CD4-positive, alpha-beta memory T cell (primary cell): ENCODE measurements at regions of chr5 and their contacts with region 1.

Region 1: GRCh38 chr5:116947691-116948528 is 373.3 kb upstream of the SEMA6A start:
- DNase-seq: peak; percentile 25 to 43 (median 29)
- H3K4me3 ChIP-seq: no peak overlapping the region
- H3K4me3 Mint-ChIP-seq: no peak overlapping the region
- H3K27ac ChIP-seq: no peak overlapping the region
- H3K27ac Mint-ChIP-seq: no peak overlapping the region
- H3K4me1 ChIP-seq: no peaks in the 10 kb centered on the region
- H3K4me1 Mint-ChIP-seq: peaks cover 0 to 8% (median 4%) of the 10 kb centered on the region in 4 donors
- H3K27me3 ChIP-seq: no peaks in the 10 kb centered on the region
- H3K27me3 Mint-ChIP-seq: no peaks in the 10 kb centered on the region

Region 2: DNA sequence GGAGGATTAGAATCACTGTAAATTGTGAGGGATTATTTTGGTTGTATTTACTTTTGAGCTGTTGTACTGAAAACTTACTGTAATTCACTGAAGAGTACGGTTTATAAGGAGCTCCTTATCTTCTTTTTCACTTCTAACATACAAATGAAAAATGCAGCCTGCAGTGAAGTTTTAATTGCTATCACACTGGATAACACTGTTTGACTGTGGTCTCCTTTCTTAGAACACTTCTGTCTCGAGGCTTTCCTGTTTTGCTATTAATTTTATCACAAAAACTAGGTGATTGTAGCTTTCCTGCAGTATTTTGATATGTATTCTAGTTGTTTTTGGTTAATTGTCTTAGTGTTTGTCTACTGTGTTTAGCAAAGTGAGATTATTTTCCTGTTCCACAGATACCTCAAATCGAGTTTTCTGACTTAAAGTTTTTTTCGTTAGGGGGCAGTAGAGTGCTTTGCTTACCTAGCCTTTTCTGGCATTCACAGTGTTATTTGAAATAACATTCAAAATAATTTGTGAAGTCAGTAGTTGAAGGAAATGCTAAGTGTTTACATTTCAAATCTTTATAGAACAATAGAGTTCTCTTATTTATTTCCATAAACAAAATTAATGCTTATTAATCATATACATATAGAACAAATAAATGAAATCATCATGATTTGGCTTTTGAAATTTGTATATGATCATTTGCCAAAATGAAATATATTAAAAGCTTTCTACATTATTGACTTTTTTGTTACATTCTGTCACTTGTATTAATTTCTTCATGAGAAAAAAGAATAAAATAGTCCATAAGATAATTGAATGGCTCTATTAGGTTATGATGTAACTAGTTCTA is 810.1 kb before region 1 on chr5:
- CTCF ChIA-PET with region 1: interaction called, 14 read pairs
- POLR2A ChIA-PET with region 1: no interaction called
- intact Hi-C with region 1: no loop called
- DNase-seq: peak in 4 of 5 donors; percentile 38 to 50 (median 44)
- H3K4me3 ChIP-seq: no peak overlapping the region
- H3K4me3 Mint-ChIP-seq: no peak overlapping the region
- H3K27ac ChIP-seq: no peak overlapping the region
- H3K27ac Mint-ChIP-seq: peak overlapping the region in 6 of 7 donors; percentile 3 to 86 (median 68)
- H3K4me1 ChIP-seq: peaks cover 15% of the 10 kb centered on the region
- H3K4me1 Mint-ChIP-seq: peaks cover 15 to 29% (median 18%) of the 10 kb centered on the region in 4 donors
- H3K27me3 ChIP-seq: no peaks in the 10 kb centered on the region
- H3K27me3 Mint-ChIP-seq: no peaks in the 10 kb centered on the region